ENCODE measurements at regions of chr2 and their contacts with region 1.

Region 1: GRCh38 chr2:178306352-178307073 is 112.2 kb downstream of the OSBPL6 start:
- DNase-seq: peak; percentile 33 to 83 (median 56)
- ATAC-seq: peak; percentile 99
- H3K4me3 ChIP-seq: no peak overlapping the region
- H3K27ac ChIP-seq: no peak overlapping the region
- H3K4me1 ChIP-seq: peaks cover 0 to 6% of the 10 kb centered on the region in 2 experiments; a peak in 2 of 5 replicates
- H3K27me3 ChIP-seq: no peaks in the 10 kb centered on the region; a peak in 1 of 5 replicates
- CTCF ChIP-seq: peak; percentile 77 to 90 (median 86)
- EP300 ChIP-seq: no peak
- POLR2A ChIP-seq: no peak
- RAD21 ChIP-seq: peak; percentile 78 to 87

Region 2: GRCh38 chr2:178397002-178397605 is 90.6 kb after region 1 on chr2:
- CTCF ChIA-PET with region 1: interaction called, 3 read pairs
- POLR2A ChIA-PET with region 1: no interaction called
- in situ Hi-C with region 1: no loop called
- intact Hi-C with region 1: loop called (anchors 1 kb)
- DNase-seq: peak in 3 of 4 experiments; percentile 27 to 63 (median 46)
- ATAC-seq: peak; percentile 83
- H3K4me3 ChIP-seq: no peak overlapping the region
- H3K27ac ChIP-seq: no peak overlapping the region
- H3K4me1 ChIP-seq: peaks cover 0 to 9% of the 10 kb centered on the region in 2 experiments; a peak in 4 of 5 replicates
- H3K27me3 ChIP-seq: no peaks in the 10 kb centered on the region
- CTCF ChIP-seq: peak; percentile 60 to 84 (median 67); a peak in 5 of 6 replicates
- EP300 ChIP-seq: no peak
- POLR2A ChIP-seq: no peak
- RAD21 ChIP-seq: peak; percentile 59 to 76

Region 3: GRCh38 chr2:178692845-178693244 is 386.3 kb after region 1 on chr2:
- CTCF ChIA-PET with region 1: no interaction called
- POLR2A ChIA-PET with region 1: no interaction called
- in situ Hi-C with region 1: no loop called
- intact Hi-C with region 1: loop called (anchors 10 kb)
- DNase-seq: no peak
- ATAC-seq: no peak
- H3K4me3 ChIP-seq: no peak overlapping the region
- H3K27ac ChIP-seq: no peak overlapping the region
- H3K4me1 ChIP-seq: no peaks in the 10 kb centered on the region
- H3K27me3 ChIP-seq: 0 out of 5 replicates have a peak, but pooled peaks cover 0 to 2% of the 10 kb centered on the region in 2 experiments
- CTCF ChIP-seq: no peak
- EP300 ChIP-seq: no peak
- POLR2A ChIP-seq: no peak
- RAD21 ChIP-seq: no peak